Activated B cell treated with CpG ODN at 0.5 μM for 24 hours (primary cell): ENCODE measurements at regions of chr1 and their contacts with region 1.

Region 1: DNA sequence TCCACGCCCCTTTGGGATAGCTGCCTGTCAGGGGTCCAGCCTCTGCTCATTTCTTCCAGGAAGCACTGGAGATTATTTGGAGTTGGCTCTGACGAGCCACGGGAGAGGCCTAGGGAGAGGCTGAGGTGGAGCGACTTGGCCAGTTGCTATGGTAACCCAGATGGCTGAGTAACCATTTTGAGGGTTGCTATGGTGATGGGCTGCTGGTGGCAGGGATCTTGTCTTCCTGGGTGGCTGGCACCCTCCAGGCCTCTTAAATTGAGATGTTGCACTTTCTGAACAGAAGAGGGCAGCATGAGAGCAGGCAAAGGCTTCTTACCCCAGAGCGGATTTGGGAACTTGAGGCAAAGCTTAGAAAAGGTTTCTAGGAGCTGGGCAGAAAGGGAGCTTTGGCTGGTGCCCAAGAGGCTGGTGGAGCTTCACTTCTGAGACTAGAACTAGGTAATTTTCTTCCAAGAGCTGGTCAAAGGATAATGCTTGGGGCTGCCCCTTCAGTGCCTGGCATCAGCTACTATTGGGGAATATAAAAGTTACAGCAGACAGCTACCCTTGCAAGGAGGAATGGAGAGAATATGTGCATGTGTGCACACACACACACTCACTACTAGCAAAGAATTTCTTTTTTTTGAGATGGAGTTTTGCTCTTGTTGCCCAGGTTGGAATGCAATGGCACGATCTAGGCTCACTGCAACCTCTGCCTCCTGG is 72.5 kb downstream of the NDUFS5 start:
- DNase-seq: peak; percentile 30
- ATAC-seq: peak; percentile 22
- H3K4me3 Mint-ChIP-seq: no peak overlapping the region
- H3K27ac Mint-ChIP-seq: no peak overlapping the region
- H3K4me1 Mint-ChIP-seq: peaks cover 26% of the 10 kb centered on the region
- H3K27me3 Mint-ChIP-seq: no peaks in the 10 kb centered on the region
- CTCF ChIP-seq: no peak

Region 2: DNA sequence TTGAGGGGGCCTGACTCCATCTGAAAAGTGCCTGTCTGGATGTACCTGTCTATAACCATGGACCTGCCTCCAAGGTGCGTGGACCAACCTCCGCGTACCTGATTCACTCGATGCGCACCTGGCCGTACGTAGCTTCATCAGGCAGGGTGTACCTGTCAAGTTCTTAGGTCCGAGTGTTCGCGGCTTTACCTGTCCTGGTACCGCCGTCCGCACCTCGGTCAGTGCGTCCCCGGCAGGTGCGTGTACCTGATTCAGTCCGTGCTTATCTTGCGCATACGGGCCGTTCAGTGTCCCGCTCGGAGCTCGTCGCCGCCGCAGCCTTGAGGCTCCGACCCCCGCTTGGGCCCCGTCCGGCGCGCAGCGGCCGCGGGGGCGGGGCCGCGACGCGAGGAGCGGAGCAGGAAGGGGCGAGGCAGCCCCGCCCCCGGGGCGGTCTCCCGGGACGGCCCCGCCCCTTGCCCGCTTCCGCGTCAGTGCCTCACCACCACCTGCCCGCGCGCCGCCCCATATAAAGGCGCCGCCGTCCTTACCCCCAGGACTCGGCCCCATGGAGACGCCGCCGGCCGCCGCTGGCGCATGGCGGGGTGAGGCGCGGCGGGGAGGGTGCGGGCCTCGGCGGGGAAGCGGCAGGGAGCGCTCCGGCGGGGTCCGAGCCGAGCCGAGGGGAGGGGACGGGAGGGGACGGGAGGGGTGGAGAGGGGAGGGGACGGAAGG is 1624.5 kb before region 1 on chr1 and contains the start of gene ZC3H12A:
- CTCF ChIA-PET with region 1: no interaction called
- POLR2A ChIA-PET with region 1: no interaction called
- intact Hi-C with region 1: loop called (anchors 10 kb)
- DNase-seq: peak; percentile 98
- ATAC-seq: peak; percentile 65
- H3K4me3 Mint-ChIP-seq: peak within 1 kb of the TSS; percentile 99
- H3K27ac Mint-ChIP-seq: peak within 1 kb of the TSS; percentile 92
- H3K4me1 Mint-ChIP-seq: peaks cover 36% of the 10 kb centered on the region
- H3K27me3 Mint-ChIP-seq: peaks cover 6% of the 10 kb centered on the region
- CTCF ChIP-seq: no peak
- total RNA-seq, gene ZC3H12A: 140 and 145 TPM in 2 replicates

Region 3: DNA sequence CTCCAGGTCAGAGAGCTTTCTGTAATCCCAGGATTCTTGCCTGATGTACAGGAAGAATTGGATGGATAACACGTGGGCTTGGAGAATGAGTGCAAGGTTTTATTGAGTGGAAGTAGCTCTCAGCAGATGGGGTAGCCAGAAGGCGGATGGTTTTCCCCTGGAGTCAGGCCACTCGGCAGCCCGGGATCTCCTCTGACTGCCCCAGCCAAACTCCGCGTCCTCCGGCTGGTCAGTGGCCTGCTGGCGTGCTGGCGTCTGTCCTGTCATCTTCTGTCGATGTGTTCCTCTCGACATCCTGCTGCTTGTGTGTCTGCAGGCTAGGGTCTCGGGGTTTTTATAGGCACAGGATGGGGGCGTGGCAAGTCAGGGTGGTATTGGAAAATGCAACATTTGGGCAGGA is 189.9 kb before region 1 on chr1:
- CTCF ChIA-PET with region 1: no interaction called
- POLR2A ChIA-PET with region 1: no interaction called
- intact Hi-C with region 1: no loop called
- DNase-seq: no peak
- ATAC-seq: no peak
- H3K4me3 Mint-ChIP-seq: no peak overlapping the region
- H3K27ac Mint-ChIP-seq: no peak overlapping the region
- H3K4me1 Mint-ChIP-seq: no peaks in the 10 kb centered on the region
- H3K27me3 Mint-ChIP-seq: no peaks in the 10 kb centered on the region
- CTCF ChIP-seq: no peak

Region 4: DNA sequence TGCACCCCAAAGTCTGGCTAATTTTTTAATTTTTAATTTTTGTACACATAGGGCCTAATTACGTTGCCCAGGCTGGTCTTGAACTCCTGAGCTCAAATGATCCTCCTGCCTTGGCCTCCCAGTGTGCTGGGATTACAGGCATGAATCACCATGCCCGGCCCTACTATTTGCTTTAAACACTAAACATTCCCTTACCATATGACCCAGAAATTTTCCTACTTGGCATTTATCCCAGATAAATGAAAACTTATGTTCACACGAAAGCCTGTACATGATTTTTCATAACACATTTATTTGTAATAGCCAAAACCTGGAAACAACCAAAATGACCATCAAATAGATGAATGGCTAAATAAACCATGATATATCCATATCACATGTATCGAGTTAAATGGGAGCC is 36.7 kb before region 1 on chr1:
- CTCF ChIA-PET with region 1: no interaction called
- POLR2A ChIA-PET with region 1: no interaction called
- intact Hi-C with region 1: no loop called
- DNase-seq: no peak
- ATAC-seq: no peak
- H3K4me3 Mint-ChIP-seq: no peak overlapping the region
- H3K27ac Mint-ChIP-seq: no peak overlapping the region
- H3K4me1 Mint-ChIP-seq: peaks cover 6% of the 10 kb centered on the region
- H3K27me3 Mint-ChIP-seq: no peaks in the 10 kb centered on the region
- CTCF ChIP-seq: no peak

Region 5: DNA sequence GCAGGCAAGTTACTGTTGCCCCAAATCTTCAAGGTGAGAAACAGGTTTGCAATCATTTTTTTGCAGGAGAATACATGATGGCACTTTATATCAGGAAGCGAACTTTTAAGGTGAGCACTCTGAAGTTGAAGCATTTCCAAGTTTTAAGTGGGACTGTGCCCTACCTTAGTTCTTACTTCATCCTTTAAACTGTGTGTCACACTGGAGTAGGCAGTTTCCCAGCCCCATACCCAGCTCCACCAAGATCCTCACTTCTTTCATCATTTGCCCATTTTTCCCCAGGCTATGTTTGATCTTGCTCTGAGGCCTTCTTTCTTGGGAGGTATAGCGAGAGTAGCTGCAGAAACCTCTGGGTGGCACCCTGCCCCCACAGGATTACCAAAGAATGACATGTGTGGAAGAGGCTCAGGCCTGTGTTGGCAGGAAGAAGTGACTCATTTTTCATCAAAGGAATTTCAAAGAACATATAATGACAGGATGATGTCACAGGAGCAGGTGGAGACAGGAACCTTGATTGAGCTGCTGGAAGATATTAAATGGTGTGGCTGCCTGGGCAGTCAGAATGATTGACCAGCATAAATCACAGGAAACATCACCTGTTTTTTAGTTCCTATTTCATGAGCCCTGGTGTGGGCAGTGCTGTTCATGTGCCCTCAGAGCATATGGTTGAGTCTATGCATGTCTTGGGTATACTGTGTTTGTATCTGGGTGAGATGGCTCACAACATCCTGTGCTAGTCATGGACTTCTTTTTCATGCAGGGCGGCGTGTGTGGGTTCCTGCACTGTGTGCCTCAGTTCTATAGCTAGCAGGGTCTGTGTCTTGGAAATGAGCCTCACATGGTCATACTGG is 85.0 kb after region 1 on chr1:
- CTCF ChIA-PET with region 1: interaction called, 86 read pairs
- POLR2A ChIA-PET with region 1: interaction called, 3 read pairs
- intact Hi-C with region 1: no loop called
- DNase-seq: no peak
- ATAC-seq: peak; percentile 81
- H3K4me3 Mint-ChIP-seq: peak overlapping the region; percentile 21
- H3K27ac Mint-ChIP-seq: peak overlapping the region; percentile 76
- H3K4me1 Mint-ChIP-seq: peaks cover 47% of the 10 kb centered on the region
- H3K27me3 Mint-ChIP-seq: no peaks in the 10 kb centered on the region
- CTCF ChIP-seq: no peak

Region 6: GRCh38 chr1:39214998-39215873 is 116.5 kb after region 1 on chr1:
- CTCF ChIA-PET with region 1: interaction called, 3 read pairs
- POLR2A ChIA-PET with region 1: interaction called, 15 read pairs
- intact Hi-C with region 1: no loop called
- DNase-seq: peak; percentile 20
- ATAC-seq: peak; percentile 83
- H3K4me3 Mint-ChIP-seq: peak overlapping the region; percentile 84
- H3K27ac Mint-ChIP-seq: peak overlapping the region; percentile 83
- H3K4me1 Mint-ChIP-seq: peaks cover 55% of the 10 kb centered on the region
- H3K27me3 Mint-ChIP-seq: no peaks in the 10 kb centered on the region
- CTCF ChIP-seq: no peak

Region 7: DNA sequence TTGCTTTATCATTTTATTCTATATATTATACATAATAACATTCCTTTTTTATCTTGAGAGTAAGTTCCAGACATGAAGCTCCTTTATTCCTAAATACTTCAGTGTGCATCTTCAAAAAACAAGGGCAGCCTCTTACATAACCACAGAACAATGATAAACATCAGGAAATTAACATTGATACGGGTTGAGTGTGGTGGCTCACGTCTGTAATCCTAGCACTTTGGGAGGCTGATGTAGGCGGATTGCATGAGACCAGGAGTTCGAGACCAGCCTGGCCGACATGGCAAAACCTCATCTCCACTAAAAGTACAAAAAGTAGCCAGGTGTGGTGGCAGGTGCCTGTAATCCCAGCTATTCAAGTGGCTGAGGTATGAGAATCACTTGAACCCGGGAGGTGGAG is 213.7 kb after region 1 on chr1:
- CTCF ChIA-PET with region 1: interaction called, 5 read pairs
- POLR2A ChIA-PET with region 1: interaction called, 10 read pairs
- intact Hi-C with region 1: no loop called
- DNase-seq: no peak
- ATAC-seq: no peak
- H3K4me3 Mint-ChIP-seq: no peak overlapping the region
- H3K27ac Mint-ChIP-seq: no peak overlapping the region
- H3K4me1 Mint-ChIP-seq: no peaks in the 10 kb centered on the region
- H3K27me3 Mint-ChIP-seq: no peaks in the 10 kb centered on the region
- CTCF ChIP-seq: no peak

Region 8: GRCh38 chr1:39525366-39526165 is 426.9 kb after region 1 on chr1:
- CTCF ChIA-PET with region 1: interaction called, 3 read pairs
- POLR2A ChIA-PET with region 1: no interaction called
- intact Hi-C with region 1: loop called (anchors 5 kb)
- DNase-seq: peak; percentile 73
- ATAC-seq: peak; percentile 99
- H3K4me3 Mint-ChIP-seq: peak overlapping the region; percentile 64
- H3K27ac Mint-ChIP-seq: peak overlapping the region; percentile 81
- H3K4me1 Mint-ChIP-seq: peaks cover 32% of the 10 kb centered on the region
- H3K27me3 Mint-ChIP-seq: no peaks in the 10 kb centered on the region
- CTCF ChIP-seq: no peak

Region 9: GRCh38 chr1:39720094-39720999 is 621.6 kb after region 1 on chr1:
- CTCF ChIA-PET with region 1: no interaction called
- POLR2A ChIA-PET with region 1: no interaction called
- intact Hi-C with region 1: loop called (anchors 1 kb)
- DNase-seq: no peak
- ATAC-seq: peak; percentile 62
- H3K4me3 Mint-ChIP-seq: no peak overlapping the region
- H3K27ac Mint-ChIP-seq: no peak overlapping the region
- H3K4me1 Mint-ChIP-seq: peaks cover 2% of the 10 kb centered on the region
- H3K27me3 Mint-ChIP-seq: peaks cover 37% of the 10 kb centered on the region
- CTCF ChIP-seq: peak; percentile 51